Esophagus muscularis mucosa (tissue), 4 donors: ENCODE measurements at regions of chr12 and their contacts with region 1.

Region 1: GRCh38 chr12:119667577-119668323 is at the start of gene PRKAB1:
- DNase-seq: peak; percentile 98
- H3K4me3 ChIP-seq: peak within 1 kb of the TSS; percentile 71 to 99 (median 84)
- H3K27ac ChIP-seq: peak within 1 kb of the TSS; percentile 90 to 93 (median 92)
- H3K4me1 ChIP-seq: peaks cover 20 to 47% (median 42%) of the 10 kb centered on the region in 4 donors
- H3K27me3 ChIP-seq: no peaks in the 10 kb centered on the region
- CTCF ChIP-seq: peak; percentile 91 to 99 (median 95)
- EP300 ChIP-seq: no peak
- POLR2A ChIP-seq: peak; percentile 49
- total RNA-seq, gene PRKAB1: 18.2 to 32.0 (median 25.4) TPM

Region 2: GRCh38 chr12:119423285-119423684 is 244.5 kb before region 1 on chr12:
- intact Hi-C with region 1: no loop called
- DNase-seq: no peak
- H3K4me3 ChIP-seq: no peak overlapping the region
- H3K27ac ChIP-seq: no peak overlapping the region
- H3K4me1 ChIP-seq: no peaks in the 10 kb centered on the region
- H3K27me3 ChIP-seq: no peaks in the 10 kb centered on the region
- CTCF ChIP-seq: no peak
- EP300 ChIP-seq: no peak
- POLR2A ChIP-seq: no peak

Region 3: DNA sequence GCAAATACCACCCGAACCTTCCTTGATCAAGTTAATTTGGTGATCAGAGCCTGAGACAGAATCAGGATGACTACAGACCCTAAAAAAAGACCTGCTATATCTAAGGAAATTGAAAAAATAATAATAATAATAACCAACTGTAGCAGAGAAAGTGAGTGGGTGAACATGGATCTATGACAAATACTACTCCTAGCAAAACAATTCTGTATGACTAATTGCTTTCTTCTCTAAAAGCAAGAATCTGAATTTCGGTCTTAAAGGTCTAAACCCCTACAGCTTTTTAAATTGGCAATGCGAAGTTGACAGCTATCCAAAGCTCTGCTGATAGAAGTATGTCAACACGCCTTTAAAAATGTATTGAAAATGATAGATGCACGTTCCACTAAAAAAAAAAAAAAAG is 102.4 kb after region 1 on chr12:
- intact Hi-C with region 1: no loop called
- DNase-seq: no peak
- H3K4me3 ChIP-seq: no peak overlapping the region
- H3K27ac ChIP-seq: no peak overlapping the region
- H3K4me1 ChIP-seq: no peaks in the 10 kb centered on the region
- H3K27me3 ChIP-seq: no peaks in the 10 kb centered on the region
- CTCF ChIP-seq: no peak
- EP300 ChIP-seq: no peak
- POLR2A ChIP-seq: no peak

Region 4: GRCh38 chr12:119780786-119781434 is 113.2 kb after region 1 on chr12:
- intact Hi-C with region 1: loop called (anchors 10 kb)
- DNase-seq: no peak
- H3K4me3 ChIP-seq: no peak overlapping the region
- H3K27ac ChIP-seq: no peak overlapping the region
- H3K4me1 ChIP-seq: peaks cover 0 to 21% (median 3%) of the 10 kb centered on the region in 4 donors
- H3K27me3 ChIP-seq: no peaks in the 10 kb centered on the region
- CTCF ChIP-seq: peak; percentile 69 to 79 (median 70)
- EP300 ChIP-seq: no peak
- POLR2A ChIP-seq: no peak